K562 (cell line): ENCODE measurements at regions of chr1 and their contacts with region 1.

Region 1: GRCh38 chr1:196309386-196309785 is 298.9 kb downstream of the KCNT2 start:
- DNase-seq: peak in 1 of 4 experiments; percentile 19
- ATAC-seq: peak; percentile 72
- H3K4me3 ChIP-seq: no peak overlapping the region
- H3K27ac ChIP-seq: no peak overlapping the region
- H3K4me1 ChIP-seq: no peaks in the 10 kb centered on the region
- H3K27me3 ChIP-seq: no peaks in the 10 kb centered on the region
- CTCF ChIP-seq: peak in 1 of 3 experiments; percentile 28; a peak in 2 of 6 replicates
- EP300 ChIP-seq: no peak
- POLR2A ChIP-seq: no peak
- RAD21 ChIP-seq: peak; percentile 65 to 75

Region 2: GRCh38 chr1:195899762-195900352 is 409.5 kb before region 1 on chr1:
- CTCF ChIA-PET with region 1: interaction called, 3 read pairs
- POLR2A ChIA-PET with region 1: no interaction called
- in situ Hi-C with region 1: no loop called
- intact Hi-C with region 1: loop called (anchors 1 kb)
- DNase-seq: peak; percentile 49 to 90 (median 62)
- ATAC-seq: peak; percentile 90
- H3K4me3 ChIP-seq: no peak overlapping the region
- H3K27ac ChIP-seq: peak overlapping the region; percentile 65
- H3K4me1 ChIP-seq: peaks cover 0 to 30% of the 10 kb centered on the region in 2 experiments; a peak in 2 of 5 replicates
- H3K27me3 ChIP-seq: no peaks in the 10 kb centered on the region
- CTCF ChIP-seq: no peak
- EP300 ChIP-seq: peak; percentile 80
- POLR2A ChIP-seq: no peak
- RAD21 ChIP-seq: no peak; a peak in 1 of 4 replicates

Region 3: DNA sequence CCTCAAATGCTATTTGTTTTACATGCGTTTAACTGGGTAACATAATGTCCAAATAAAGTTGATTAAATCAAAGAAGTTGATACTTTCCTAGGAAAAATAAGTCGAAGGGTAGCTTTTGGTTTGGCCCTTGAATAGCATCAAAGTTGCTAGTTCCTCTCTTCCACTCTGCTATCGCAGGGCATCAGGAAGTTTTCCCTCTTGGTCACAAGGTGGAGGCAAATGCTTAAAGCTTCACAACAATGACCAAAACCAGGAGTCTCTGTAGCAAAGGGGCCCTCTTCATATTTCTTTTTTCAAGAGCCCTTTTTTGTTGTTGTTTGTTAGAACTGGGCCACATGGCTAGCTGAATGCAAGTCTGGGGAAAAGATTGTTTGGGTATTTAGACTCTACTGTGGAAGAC is 369.5 kb before region 1 on chr1:
- CTCF ChIA-PET with region 1: no interaction called
- POLR2A ChIA-PET with region 1: no interaction called
- in situ Hi-C with region 1: no loop called
- intact Hi-C with region 1: loop called (anchors 1 kb)
- DNase-seq: peak in 2 of 4 experiments; percentile 15 to 28
- ATAC-seq: peak; percentile 80
- H3K4me3 ChIP-seq: no peak overlapping the region
- H3K27ac ChIP-seq: no peak overlapping the region
- H3K4me1 ChIP-seq: no peaks in the 10 kb centered on the region
- H3K27me3 ChIP-seq: no peaks in the 10 kb centered on the region
- CTCF ChIP-seq: peak in 2 of 3 experiments; percentile 38 to 39; a peak in 4 of 6 replicates
- EP300 ChIP-seq: no peak
- POLR2A ChIP-seq: no peak
- RAD21 ChIP-seq: peak in 1 of 2 experiments; percentile 59; a peak in 2 of 4 replicates

Region 4: DNA sequence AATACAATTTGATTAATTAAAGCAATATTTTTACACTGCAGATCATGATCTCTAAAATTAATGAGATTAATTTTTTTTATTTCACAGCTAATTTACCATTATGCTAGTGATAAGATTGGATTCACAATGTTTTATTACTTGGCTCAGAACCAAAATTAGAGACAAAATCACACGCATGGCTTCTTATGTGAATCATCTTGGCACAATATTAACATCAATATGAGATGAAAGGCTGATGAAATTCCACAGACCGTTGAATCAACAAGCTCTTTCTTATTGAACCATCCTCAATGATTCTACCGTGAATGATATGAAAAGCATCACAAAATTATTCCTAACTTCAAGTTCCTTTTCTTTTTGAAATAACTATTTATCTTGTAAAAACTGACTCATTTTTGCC is 246.1 kb before region 1 on chr1:
- CTCF ChIA-PET with region 1: no interaction called
- POLR2A ChIA-PET with region 1: no interaction called
- in situ Hi-C with region 1: no loop called
- intact Hi-C with region 1: loop called (anchors 1 kb)
- DNase-seq: no peak
- ATAC-seq: no peak
- H3K4me3 ChIP-seq: no peak overlapping the region
- H3K27ac ChIP-seq: no peak overlapping the region
- H3K4me1 ChIP-seq: no peaks in the 10 kb centered on the region
- H3K27me3 ChIP-seq: no peaks in the 10 kb centered on the region
- CTCF ChIP-seq: no peak
- EP300 ChIP-seq: no peak
- POLR2A ChIP-seq: no peak
- RAD21 ChIP-seq: no peak

Region 5: GRCh38 chr1:196295766-196296165 is 13.6 kb before region 1 on chr1:
- CTCF ChIA-PET with region 1: no interaction called
- POLR2A ChIA-PET with region 1: no interaction called
- in situ Hi-C with region 1: no loop called
- intact Hi-C with region 1: no loop called
- DNase-seq: no peak
- ATAC-seq: no peak
- H3K4me3 ChIP-seq: no peak overlapping the region
- H3K27ac ChIP-seq: no peak overlapping the region
- H3K4me1 ChIP-seq: no peaks in the 10 kb centered on the region
- H3K27me3 ChIP-seq: no peaks in the 10 kb centered on the region
- CTCF ChIP-seq: no peak
- EP300 ChIP-seq: no peak
- POLR2A ChIP-seq: no peak
- RAD21 ChIP-seq: no peak